Tibial artery (tissue), 4 donors: ENCODE measurements at regions of chr2 and their contacts with region 1.

Region 1: GRCh38 chr2:210189452-210190143 is 18.4 kb upstream of the KANSL1L start:
- DNase-seq: no peak
- H3K4me3 ChIP-seq: no peak overlapping the region
- H3K27ac ChIP-seq: no peak overlapping the region
- H3K4me1 ChIP-seq: no peaks in the 10 kb centered on the region
- H3K27me3 ChIP-seq: no peaks in the 10 kb centered on the region
- CTCF ChIP-seq: no peak

Region 2: GRCh38 chr2:209998596-209998995 is 191.0 kb before region 1 on chr2:
- intact Hi-C with region 1: loop called (anchors 5 kb)
- DNase-seq: no peak
- H3K4me3 ChIP-seq: no peak overlapping the region
- H3K27ac ChIP-seq: no peak overlapping the region
- H3K4me1 ChIP-seq: peaks cover 0 to 12% (median 6%) of the 10 kb centered on the region in 4 donors
- H3K27me3 ChIP-seq: no peaks in the 10 kb centered on the region
- CTCF ChIP-seq: no peak